ENCODE measurements at regions of chr2 and their contacts with region 1.

Region 1: GRCh38 chr2:158403237-158403636 is 53.3 kb downstream of the CCDC148 start:
- DNase-seq: no peak
- H3K4me3 ChIP-seq: no peak overlapping the region
- H3K27ac ChIP-seq: no peak overlapping the region
- H3K4me1 ChIP-seq: no peaks in the 10 kb centered on the region
- H3K27me3 ChIP-seq: no peaks in the 10 kb centered on the region
- CTCF ChIP-seq: no peak
- POLR2A ChIP-seq: no peak

Region 2: DNA sequence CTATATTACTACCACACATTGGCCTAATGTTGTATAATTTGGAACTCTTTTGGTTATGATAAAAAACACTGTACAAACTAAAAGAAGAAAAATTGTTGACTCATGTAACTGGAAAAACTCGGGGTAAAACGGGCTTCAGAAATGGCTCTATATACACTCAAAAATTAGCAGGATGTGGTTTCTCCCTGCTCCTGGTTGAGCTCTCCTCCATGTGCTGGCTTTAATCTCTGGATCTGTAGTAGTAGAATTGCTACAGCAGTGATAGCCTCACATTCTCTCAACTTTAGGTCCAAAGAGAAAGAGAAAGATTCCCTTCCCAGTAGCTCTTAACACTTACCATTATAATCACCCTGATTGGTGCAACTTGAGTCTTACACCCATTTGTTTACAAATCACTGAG is 1420.6 kb before region 1 on chr2:
- intact Hi-C with region 1: loop called (anchors 10 kb)
- DNase-seq: no peak
- H3K4me3 ChIP-seq: no peak overlapping the region
- H3K27ac ChIP-seq: no peak overlapping the region
- H3K4me1 ChIP-seq: no peaks in the 10 kb centered on the region
- H3K27me3 ChIP-seq: no peaks in the 10 kb centered on the region
- CTCF ChIP-seq: no peak
- POLR2A ChIP-seq: no peak

Measured in breast epithelium (tissue), 4 donors.